MCF 10A (cell line): ENCODE measurements at regions of chr10 and their contacts with region 1.

Region 1: GRCh38 chr10:102917962-102918816 is at the start of gene CNNM2:
- DNase-seq: peak; percentile 100
- H3K4me3 Mint-ChIP-seq: peak within 1 kb of the TSS; percentile 89
- H3K27ac Mint-ChIP-seq: peak within 1 kb of the TSS; percentile 49
- H3K4me1 Mint-ChIP-seq: peaks cover 24% of the 10 kb centered on the region
- H3K27me3 Mint-ChIP-seq: no peaks in the 10 kb centered on the region
- CTCF ChIP-seq: no peak
- total RNA-seq, gene CNNM2: 5.6 and 7.4 TPM in 2 replicates

Region 2: DNA sequence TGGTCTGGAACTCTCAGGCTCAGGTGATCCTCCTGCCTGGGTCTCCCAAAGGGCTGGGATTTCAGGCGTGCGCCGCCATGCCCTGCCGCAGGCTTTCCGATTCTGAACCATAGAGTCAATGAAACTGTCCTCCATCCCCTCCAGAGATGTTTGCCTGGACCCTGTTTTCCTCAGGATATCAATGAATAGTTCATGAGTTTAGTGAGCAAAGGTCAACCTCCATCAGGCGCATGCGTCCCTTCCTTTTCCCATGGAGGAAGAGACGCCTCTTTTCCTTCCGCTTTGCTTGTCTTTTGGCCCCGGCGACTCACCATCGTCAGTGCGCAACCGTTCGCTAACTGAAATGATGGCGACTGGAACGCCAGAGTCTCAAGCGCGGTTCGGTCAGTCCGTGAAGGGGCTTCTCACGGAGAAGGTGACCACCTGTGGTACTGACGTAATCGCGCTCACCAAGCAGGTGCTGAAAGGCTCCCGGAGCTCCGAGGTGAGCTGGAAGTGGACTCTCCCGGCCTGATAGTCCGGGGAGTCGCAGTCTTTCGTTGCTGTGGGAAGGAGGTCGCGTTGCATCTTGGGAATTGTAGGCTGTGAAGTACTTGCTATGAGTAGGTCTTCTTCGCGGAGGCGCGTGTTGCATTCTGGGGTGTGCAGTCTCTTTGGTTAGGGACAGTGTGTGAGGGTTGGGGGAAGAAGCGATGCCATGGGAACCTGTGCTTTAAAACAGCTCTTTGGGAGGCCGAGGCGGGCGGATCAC is 64.1 kb before region 1 on chr10 and contains the start of gene BORCS7:
- CTCF ChIA-PET with region 1: no interaction called
- POLR2A ChIA-PET with region 1: interaction called, 11 read pairs
- intact Hi-C with region 1: no loop called
- DNase-seq: peak; percentile 97
- H3K4me3 Mint-ChIP-seq: peak within 1 kb of the TSS; percentile 83
- H3K27ac Mint-ChIP-seq: peak within 1 kb of the TSS; percentile 93
- H3K4me1 Mint-ChIP-seq: peaks cover 13% of the 10 kb centered on the region
- H3K27me3 Mint-ChIP-seq: no peaks in the 10 kb centered on the region
- CTCF ChIP-seq: no peak
- total RNA-seq, gene BORCS7: 13.1 and 18.0 TPM in 2 replicates

Region 3: GRCh38 chr10:103062604-103063590 is 144.7 kb after region 1 on chr10:
- CTCF ChIA-PET with region 1: interaction called, 52 read pairs
- POLR2A ChIA-PET with region 1: interaction called, 13 read pairs
- intact Hi-C with region 1: no loop called
- DNase-seq: peak; percentile 13
- H3K4me3 Mint-ChIP-seq: no peak overlapping the region
- H3K27ac Mint-ChIP-seq: no peak overlapping the region
- H3K4me1 Mint-ChIP-seq: no peaks in the 10 kb centered on the region
- H3K27me3 Mint-ChIP-seq: no peaks in the 10 kb centered on the region
- CTCF ChIP-seq: no peak

Region 4: GRCh38 chr10:103192451-103193106 is 274.4 kb after region 1 on chr10:
- CTCF ChIA-PET with region 1: interaction called, 3 read pairs
- POLR2A ChIA-PET with region 1: interaction called, 10 read pairs
- intact Hi-C with region 1: no loop called
- DNase-seq: peak; percentile 76
- H3K4me3 Mint-ChIP-seq: peak overlapping the region; percentile 98
- H3K27ac Mint-ChIP-seq: peak overlapping the region; percentile 94
- H3K4me1 Mint-ChIP-seq: peaks cover 38% of the 10 kb centered on the region
- H3K27me3 Mint-ChIP-seq: no peaks in the 10 kb centered on the region
- CTCF ChIP-seq: no peak

Region 5: GRCh38 chr10:103481974-103482531 is 563.9 kb after region 1 on chr10:
- CTCF ChIA-PET with region 1: no interaction called
- POLR2A ChIA-PET with region 1: no interaction called
- intact Hi-C with region 1: loop called (anchors 5 kb)
- DNase-seq: peak; percentile 78
- H3K4me3 Mint-ChIP-seq: no peak overlapping the region
- H3K27ac Mint-ChIP-seq: no peak overlapping the region
- H3K4me1 Mint-ChIP-seq: peaks cover 9% of the 10 kb centered on the region
- H3K27me3 Mint-ChIP-seq: no peaks in the 10 kb centered on the region
- CTCF ChIP-seq: peak; percentile 46